ENCODE measurements at regions of chr3 and their contacts with region 1.

Region 1: GRCh38 chr3:146449584-146449983 is 19.8 kb downstream of the PLSCR2 start:
- DNase-seq: no peak

Region 2: DNA sequence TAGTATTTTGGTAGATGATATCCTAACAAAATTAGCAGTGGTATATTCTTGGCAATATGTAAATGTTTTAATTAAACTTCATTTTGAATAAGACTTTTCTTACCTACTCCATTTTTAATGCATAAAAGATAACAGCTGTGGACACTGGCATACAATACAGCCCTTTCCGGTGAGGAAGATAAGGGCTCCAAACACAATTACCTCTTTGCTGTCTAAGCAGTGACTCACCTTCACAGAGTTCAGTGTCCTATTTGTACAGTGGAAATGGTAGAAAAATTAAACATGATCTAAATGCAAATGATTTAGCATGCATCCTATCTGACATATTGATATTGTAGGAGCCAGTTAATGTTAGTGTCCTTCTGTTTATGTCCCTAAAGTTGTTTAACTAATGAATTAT is 1258.0 kb before region 1 on chr3:
- intact Hi-C with region 1: loop called in 1 of 2 experiments (anchors 5 kb)
- DNase-seq: no peak

Region 3: DNA sequence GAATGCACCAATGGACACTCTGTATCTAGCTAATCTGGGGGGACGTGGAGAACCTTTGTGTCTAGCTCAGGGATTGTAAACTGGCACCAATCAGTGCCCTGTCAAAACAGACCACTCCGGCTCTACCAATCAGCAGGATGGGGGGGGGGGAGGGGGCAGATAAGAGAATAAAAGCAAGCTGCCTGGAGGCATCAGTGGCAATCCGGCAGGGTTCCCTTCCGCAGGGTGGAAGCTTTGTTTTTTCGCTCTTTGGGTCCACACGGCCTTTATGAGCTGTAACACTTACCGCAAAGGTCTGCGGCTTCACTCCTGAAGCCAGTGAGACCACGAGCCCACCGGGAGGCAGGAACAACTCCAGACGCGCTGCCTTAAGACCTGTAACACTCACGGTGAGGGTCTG is 1115.7 kb before region 1 on chr3:
- intact Hi-C with region 1: loop called in 1 of 2 experiments (anchors 5 kb)
- DNase-seq: no peak

Region 4: GRCh38 chr3:146421889-146422288 is 27.7 kb before region 1 on chr3:
- intact Hi-C with region 1: loop called in 1 of 2 experiments (anchors 1 kb)
- DNase-seq: no peak

Measured in posterior vena cava (tissue), 2 donors.